GM13977 (cell line): ENCODE measurements at regions of chr6 and their contacts with region 1.

Region 1: DNA sequence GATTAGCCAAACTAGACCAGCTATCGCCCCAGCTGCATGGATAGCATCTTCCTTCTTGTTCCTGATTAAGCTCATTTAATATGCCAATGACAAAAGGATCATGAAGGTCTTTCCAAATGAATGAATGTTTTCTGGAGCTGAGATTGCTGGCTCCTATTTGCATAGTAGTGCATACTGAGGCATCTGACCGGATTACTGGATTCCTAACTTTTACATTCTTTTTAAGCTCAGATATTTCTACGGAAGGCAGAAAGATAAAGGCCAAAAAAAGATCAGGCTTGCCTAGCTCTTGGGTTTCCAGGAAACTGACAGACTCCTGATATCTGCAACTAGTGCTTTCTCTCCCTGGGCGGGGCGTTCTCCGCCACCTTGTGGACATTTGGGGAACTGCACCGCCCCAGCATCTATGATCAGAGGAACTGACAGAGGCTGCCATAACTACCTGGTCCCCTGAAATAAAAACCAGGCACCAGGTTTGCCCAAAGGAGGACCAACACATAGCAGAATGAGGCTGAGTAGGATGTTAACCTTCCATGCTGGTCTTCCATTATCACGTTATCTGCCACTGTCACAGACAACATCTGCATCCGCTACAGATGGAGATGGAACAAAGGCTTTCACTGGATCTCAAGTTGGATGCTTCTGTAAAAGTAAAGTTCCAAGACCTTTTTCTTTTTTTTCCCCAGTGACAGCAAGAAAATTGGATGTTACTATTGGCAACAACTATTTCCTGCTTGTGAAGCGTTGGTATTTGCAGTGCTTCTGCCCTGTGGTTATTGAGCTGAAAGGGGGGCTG is 33.2 kb downstream of the NT5E start:
- DNase-seq: peak; percentile 60
- CTCF ChIP-seq: peak; percentile 98

Region 2: DNA sequence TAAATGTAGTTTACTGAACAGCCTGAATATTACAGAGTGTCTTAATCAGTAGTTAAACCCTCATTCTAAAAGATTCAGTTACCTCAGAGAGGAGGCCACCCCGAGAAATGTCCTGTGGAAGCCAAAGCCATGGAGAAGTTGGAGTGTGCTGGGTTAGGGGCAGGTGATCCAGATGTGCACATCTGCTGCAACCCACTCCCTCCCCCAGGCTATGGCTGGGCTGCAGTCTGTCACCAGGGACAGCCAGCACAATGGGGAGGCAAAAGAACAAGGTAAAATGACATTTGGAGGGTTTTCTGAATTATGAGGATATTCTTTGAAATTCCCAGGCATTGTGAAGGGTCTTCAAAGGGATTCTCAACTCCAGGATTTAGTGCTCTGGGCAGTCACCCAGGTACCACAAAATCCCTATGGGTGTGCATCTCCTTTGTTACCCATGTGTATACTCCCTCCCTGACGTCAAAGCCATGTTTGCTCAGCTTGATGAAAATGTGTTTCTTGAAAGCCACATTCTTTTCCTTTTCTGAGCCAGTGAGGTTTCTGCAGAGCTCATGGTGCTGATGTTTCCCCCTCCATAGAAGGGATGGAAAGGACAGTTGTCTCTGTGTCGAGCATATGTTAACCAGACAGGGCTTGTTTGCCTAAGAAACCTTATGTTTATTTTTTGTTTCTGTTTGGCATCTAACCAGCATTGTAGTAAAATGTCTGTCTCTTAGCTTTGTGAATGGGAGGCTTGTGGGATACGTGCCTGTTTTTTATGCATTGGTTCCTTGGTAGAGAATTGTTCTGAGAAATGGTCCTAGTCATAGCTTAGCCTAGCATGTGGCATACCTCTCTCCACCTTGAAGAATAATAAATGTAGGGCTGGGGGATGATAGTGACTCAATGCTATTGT is 506.3 kb before region 1 on chr6:
- in situ Hi-C with region 1: no loop called
- DNase-seq: no peak
- CTCF ChIP-seq: no peak

Region 3: GRCh38 chr6:85015396-85015990 is 467.6 kb before region 1 on chr6:
- in situ Hi-C with region 1: no loop called
- DNase-seq: no peak
- CTCF ChIP-seq: peak; percentile 54

Region 4: GRCh38 chr6:85186546-85187175 is 296.4 kb before region 1 on chr6:
- in situ Hi-C with region 1: no loop called
- DNase-seq: no peak
- CTCF ChIP-seq: no peak

Region 5: DNA sequence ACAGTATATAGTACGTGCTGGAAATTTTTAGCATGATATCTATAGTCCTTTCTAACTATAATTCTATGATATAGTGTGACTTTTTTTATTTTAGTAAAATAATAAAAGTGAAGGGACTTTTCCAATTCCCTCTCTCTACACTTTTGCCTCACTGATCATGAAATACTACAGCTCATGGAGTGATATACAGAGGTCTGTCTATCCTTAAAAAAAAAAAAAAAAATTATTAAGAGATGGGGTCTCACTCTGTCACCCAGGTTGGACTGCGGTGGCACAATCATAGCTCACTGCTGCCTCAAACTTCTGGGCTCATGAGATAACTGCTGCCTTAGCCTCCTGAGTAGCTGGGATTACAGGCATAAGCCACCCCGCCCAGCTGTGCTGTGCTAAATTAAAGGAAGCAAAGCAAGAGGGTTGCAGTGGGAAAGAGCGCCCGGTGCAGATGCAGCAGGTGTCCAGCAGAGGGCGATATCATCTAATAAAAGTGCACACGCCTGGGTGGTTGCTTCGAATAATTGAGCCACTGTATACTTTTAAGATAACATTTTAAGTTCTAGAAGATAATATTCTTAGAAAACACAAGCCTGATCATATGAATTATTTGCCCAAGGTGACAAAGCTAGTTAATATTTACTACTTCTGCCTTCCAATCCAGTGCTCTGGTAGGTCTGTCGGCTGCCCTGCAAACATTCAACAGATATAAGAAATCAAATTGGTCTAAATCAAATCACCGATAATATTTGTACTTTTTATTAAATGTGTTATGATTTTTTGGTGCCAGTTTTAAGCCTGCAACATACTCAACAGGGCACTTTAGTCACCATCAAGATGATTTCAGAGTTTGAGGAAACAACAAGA is 128.1 kb before region 1 on chr6:
- in situ Hi-C with region 1: loop called (anchors 5 kb)
- DNase-seq: peak; percentile 47
- CTCF ChIP-seq: peak; percentile 91

Region 6: GRCh38 chr6:85600713-85601313 is 117.7 kb after region 1 on chr6:
- in situ Hi-C with region 1: no loop called
- DNase-seq: no peak
- CTCF ChIP-seq: no peak